Breast epithelium (tissue), 4 donors: ENCODE measurements at regions of chr17 and their contacts with region 1.

Region 1: GRCh38 chr17:1186923-1187771 is 7.4 kb upstream of the ABR start:
- DNase-seq: peak; percentile 72 to 89
- H3K4me3 ChIP-seq: peak overlapping the region; percentile 13 to 56 (median 14)
- H3K27ac ChIP-seq: peak overlapping the region; percentile 23 to 69
- H3K4me1 ChIP-seq: peaks cover 0 to 7% of the 10 kb centered on the region in 2 donors
- H3K27me3 ChIP-seq: no peaks in the 10 kb centered on the region
- CTCF ChIP-seq: peak; percentile 88 to 97 (median 96)
- POLR2A ChIP-seq: no peak

Region 2: GRCh38 chr17:1122533-1123392 is 64.4 kb before region 1 on chr17:
- intact Hi-C with region 1: loop called (anchors 10 kb)
- DNase-seq: peak; percentile 67 to 84
- H3K4me3 ChIP-seq: peak overlapping the region in 1 of 3 donors; percentile 45
- H3K27ac ChIP-seq: peak overlapping the region; percentile 54 to 59
- H3K4me1 ChIP-seq: peaks cover 0 to 12% of the 10 kb centered on the region in 2 donors
- H3K27me3 ChIP-seq: no peaks in the 10 kb centered on the region
- CTCF ChIP-seq: peak; percentile 83 to 94 (median 93)
- POLR2A ChIP-seq: no peak